Vagina (tissue), 2 donors: ENCODE measurements at regions of chr1 and their contacts with region 1.

Region 1: DNA sequence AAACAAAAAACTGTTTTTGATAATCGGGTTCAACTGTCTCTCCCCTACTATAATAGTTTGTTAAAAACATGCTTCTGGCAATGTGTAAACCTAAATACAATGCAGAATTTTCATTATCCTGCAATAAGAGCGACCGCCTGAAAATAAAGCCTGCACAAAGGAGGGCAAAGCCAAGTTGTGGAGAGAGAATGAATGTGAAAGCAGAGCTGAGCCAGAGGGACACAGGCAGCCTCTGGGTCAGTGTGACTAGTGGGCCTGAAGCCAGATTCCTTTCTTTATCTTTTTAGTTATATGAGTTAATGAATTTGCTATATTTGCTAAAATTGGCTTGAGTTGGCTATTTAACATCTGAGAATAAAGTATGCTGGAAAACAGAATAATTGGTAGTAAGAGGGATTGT is 615.2 kb downstream of the PLA2G4A start:
- DNase-seq: no peak
- H3K4me3 ChIP-seq: no peak overlapping the region
- H3K27ac ChIP-seq: no peak overlapping the region
- H3K4me1 ChIP-seq: no peaks in the 10 kb centered on the region
- H3K27me3 ChIP-seq: no peaks in the 10 kb centered on the region
- CTCF ChIP-seq: no peak
- POLR2A ChIP-seq: no peak

Region 2: DNA sequence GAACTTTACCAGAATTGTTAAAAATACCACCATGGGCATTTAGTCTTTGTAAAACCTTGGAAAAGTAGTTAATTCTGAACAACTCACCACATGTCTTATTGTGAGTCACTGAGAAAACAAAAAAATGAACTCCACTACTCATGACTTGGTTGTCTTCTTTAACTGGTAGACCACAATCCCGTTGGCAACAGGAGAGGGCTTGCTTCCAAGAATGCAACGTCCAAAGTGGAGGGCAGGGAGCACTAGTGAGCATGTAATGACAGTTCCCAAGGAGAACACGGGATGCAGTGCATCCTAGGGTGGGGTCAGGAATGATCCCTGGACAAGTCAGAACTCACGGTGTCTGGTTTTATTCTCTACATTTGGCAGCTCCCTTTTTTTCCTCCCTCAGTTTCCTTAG is 1724.9 kb before region 1 on chr1:
- intact Hi-C with region 1: loop called (anchors 5 kb)
- DNase-seq: no peak
- H3K4me3 ChIP-seq: no peak overlapping the region
- H3K27ac ChIP-seq: no peak overlapping the region
- H3K4me1 ChIP-seq: no peaks in the 10 kb centered on the region
- H3K27me3 ChIP-seq: no peaks in the 10 kb centered on the region
- CTCF ChIP-seq: no peak
- POLR2A ChIP-seq: no peak

Region 3: GRCh38 chr1:187413405-187414182 is 30.3 kb before region 1 on chr1:
- intact Hi-C with region 1: loop called (anchors 1 kb)
- DNase-seq: no peak
- H3K4me3 ChIP-seq: no peak overlapping the region
- H3K27ac ChIP-seq: no peak overlapping the region
- H3K4me1 ChIP-seq: no peaks in the 10 kb centered on the region
- H3K27me3 ChIP-seq: no peaks in the 10 kb centered on the region
- CTCF ChIP-seq: no peak
- POLR2A ChIP-seq: no peak

Region 4: DNA sequence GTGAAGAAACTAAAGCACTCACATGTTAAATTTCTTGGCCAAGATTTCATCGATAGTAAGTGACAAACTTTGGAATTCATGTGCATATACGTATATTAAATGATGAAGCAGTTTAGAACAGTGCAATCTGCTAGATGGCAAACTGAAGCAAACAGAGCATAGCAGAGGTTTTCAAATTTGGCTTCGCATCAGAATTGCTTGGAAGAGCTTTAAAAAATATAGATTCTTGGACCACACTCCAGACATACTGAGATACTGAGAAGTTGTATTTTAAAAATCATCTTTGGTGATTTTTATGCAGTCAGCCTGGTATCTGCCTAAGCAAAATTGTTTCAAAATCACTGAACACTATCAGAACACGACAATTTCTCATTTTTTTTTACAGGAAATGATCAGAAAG is 94.0 kb after region 1 on chr1:
- intact Hi-C with region 1: no loop called
- DNase-seq: no peak
- H3K4me3 ChIP-seq: no peak overlapping the region
- H3K27ac ChIP-seq: no peak overlapping the region
- H3K4me1 ChIP-seq: no peaks in the 10 kb centered on the region
- H3K27me3 ChIP-seq: no peaks in the 10 kb centered on the region
- CTCF ChIP-seq: no peak
- POLR2A ChIP-seq: no peak